H1 (cell line): ENCODE measurements at regions of chr17 and their contacts with region 1.

Region 1: GRCh38 chr17:10697092-10698081 is at the starts of genes ADPRM and SCO1:
- DNase-seq: peak; percentile 81 to 90
- H3K4me3 ChIP-seq: peak within 1 kb of the TSS; percentile 76 to 97 (median 84)
- H3K27ac ChIP-seq: peak within 1 kb of the TSS; percentile 85
- H3K4me1 ChIP-seq: no peaks in the 10 kb centered on the region
- H3K27me3 ChIP-seq: no peaks in the 10 kb centered on the region
- CTCF ChIP-seq: peak; percentile 21 to 62 (median 30)
- EP300 ChIP-seq: no peak
- POLR2A ChIP-seq: peak in 1 of 2 experiments; percentile 97; a peak in 2 of 3 replicates
- RAD21 ChIP-seq: peak in 1 of 2 experiments; percentile 22; a peak in 2 of 4 replicates
- total RNA-seq, gene ADPRM: 6.0 and 6.7 TPM in 2 replicates
- total RNA-seq, gene SCO1: 60.3 and 61.8 TPM in 2 replicates

Region 2: DNA sequence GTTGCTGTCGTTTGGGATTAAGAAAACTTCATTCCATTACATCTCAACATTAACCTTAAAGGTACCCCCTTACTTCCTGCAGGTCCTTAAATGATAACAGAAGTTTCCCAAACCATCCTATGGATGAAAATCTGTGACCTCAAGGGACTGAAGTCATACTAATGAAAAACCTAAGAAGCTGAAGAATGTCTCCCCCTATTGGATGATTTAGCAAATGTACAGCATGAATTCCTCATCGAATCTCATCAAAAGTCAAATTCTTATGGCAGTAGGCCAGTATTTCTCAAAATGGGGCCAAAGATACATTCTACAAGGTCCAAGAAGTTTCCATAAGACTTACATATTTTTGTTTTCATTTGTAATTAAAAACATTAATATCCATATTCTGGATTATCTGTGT is 13.5 kb before region 1 on chr17:
- CTCF ChIA-PET with region 1: interaction called, 17 read pairs
- POLR2A ChIA-PET with region 1: interaction called, 4 read pairs
- DNase-seq: no peak
- H3K4me3 ChIP-seq: no peak overlapping the region
- H3K27ac ChIP-seq: no peak overlapping the region
- H3K4me1 ChIP-seq: no peaks in the 10 kb centered on the region
- H3K27me3 ChIP-seq: no peaks in the 10 kb centered on the region
- CTCF ChIP-seq: peak in 1 of 3 experiments; percentile 56; a peak in 2 of 4 replicates
- EP300 ChIP-seq: no peak
- POLR2A ChIP-seq: no peak
- RAD21 ChIP-seq: peak in 1 of 2 experiments; percentile 36; a peak in 2 of 4 replicates